Mucosa of descending colon (tissue), 3 donors: ENCODE measurements at regions of chr5 and their contacts with region 1.

Region 1: DNA sequence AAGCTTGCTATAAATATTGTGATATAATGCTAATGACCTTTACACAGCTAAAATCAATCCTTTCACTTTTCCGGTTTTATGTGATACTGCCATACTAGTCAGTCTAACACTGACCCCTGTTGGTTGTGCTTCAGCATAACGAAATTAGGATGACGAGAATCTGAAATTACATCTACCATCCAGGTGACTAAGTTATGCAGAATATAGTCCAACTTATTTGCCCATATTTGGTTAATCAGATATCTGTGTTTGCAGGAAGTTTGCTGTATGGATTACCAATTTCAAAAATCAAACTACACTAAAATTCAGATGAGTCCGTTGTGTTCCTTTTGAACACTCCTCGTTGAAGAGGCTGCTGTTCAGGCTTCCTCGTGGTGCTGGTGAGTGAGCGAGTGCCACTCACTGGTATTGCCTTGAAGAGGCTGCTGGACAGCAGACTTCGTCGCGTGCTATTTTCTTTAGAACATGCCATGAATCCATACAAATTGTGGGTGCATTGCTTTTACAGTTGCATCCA is 32.5 kb downstream of the TENT4A start:
- DNase-seq: peak in 1 of 3 donors; percentile 67
- ATAC-seq: peak; percentile 87
- H3K4me3 ChIP-seq: no peak overlapping the region
- H3K4me1 ChIP-seq: no peaks in the 10 kb centered on the region
- CTCF ChIP-seq: peak; percentile 44

Region 2: GRCh38 chr5:5492087-5492933 is 1253.5 kb before region 1 on chr5:
- intact Hi-C with region 1: loop called in 1 of 2 experiments (anchors 10 kb)
- DNase-seq: peak in 1 of 3 donors; percentile 37
- ATAC-seq: peak; percentile 52
- H3K4me3 ChIP-seq: no peak overlapping the region
- H3K4me1 ChIP-seq: peaks cover 11% of the 10 kb centered on the region
- CTCF ChIP-seq: peak; percentile 23

Region 3: GRCh38 chr5:6632917-6633468 is 112.8 kb before region 1 on chr5 and contains the starts of genes NSUN2 and SRD5A1:
- intact Hi-C with region 1: loop called in 1 of 2 experiments (anchors 10 kb)
- DNase-seq: peak; percentile 92 to 96 (median 94)
- ATAC-seq: peak; percentile 98
- H3K4me3 ChIP-seq: peak within 1 kb of the TSS; percentile 91
- H3K4me1 ChIP-seq: peaks cover 11% of the 10 kb centered on the region
- CTCF ChIP-seq: no peak
- total RNA-seq, gene NSUN2: 50.3 to 54.3 (median 52.5) TPM
- total RNA-seq, gene SRD5A1: 12.7 to 16.2 (median 14.3) TPM